Activated CD8-positive, alpha-beta T cell treated with anti-CD3 and anti-CD28 coated beads, Interleukin-2, amount 10 ng/mL, durations not matched to agents 7 days and 5 days (primary cell): ENCODE measurements at regions of chr2 and their contacts with region 1.

Region 1: GRCh38 chr2:38581193-38582147 is 21.3 kb downstream of the HNRNPLL start:
- DNase-seq: peak; percentile 59
- ATAC-seq: peak; percentile 89
- H3K4me3 Mint-ChIP-seq: no peak overlapping the region
- H3K27ac Mint-ChIP-seq: no peak overlapping the region
- H3K4me1 Mint-ChIP-seq: peaks cover 8% of the 10 kb centered on the region
- H3K27me3 Mint-ChIP-seq: no peaks in the 10 kb centered on the region

Region 2: DNA sequence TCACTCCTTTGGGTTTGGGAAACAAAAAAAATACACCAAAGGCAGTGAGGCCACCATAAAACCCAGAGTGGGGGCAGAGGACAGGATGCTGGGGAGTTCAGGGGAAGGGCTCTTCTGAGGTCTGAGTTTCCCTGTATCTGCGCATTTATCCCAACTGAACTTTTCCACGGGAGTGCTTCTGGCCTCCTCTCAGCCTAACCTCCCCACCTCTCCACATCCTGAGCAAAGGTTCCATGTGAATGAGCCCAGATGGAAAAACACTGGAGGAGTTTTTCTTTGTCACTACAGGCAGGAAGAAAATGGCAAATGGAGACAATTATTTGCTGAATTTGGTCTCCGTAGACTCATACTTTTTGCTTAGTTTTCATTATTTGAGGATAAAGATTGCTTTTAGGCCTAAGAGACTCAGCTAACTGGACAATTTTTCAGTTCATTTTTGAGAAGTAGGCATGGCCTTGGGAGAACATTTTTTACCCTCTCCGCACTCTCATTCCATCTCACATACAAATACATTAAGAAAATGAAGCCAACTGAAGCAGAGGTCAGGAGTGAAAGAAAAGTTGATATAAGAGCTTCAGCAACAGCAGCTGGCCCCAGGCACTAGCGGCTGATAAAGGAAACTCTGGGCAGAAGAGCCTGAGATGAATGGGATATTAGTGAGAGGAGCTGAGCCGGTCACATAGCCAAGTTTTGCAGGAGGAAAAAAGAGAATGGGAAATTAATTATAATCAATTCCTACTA is 422.9 kb before region 1 on chr2:
- CTCF ChIA-PET with region 1: no interaction called
- POLR2A ChIA-PET with region 1: no interaction called
- DNase-seq: no peak
- ATAC-seq: no peak
- H3K4me3 Mint-ChIP-seq: no peak overlapping the region
- H3K27ac Mint-ChIP-seq: no peak overlapping the region
- H3K4me1 Mint-ChIP-seq: no peaks in the 10 kb centered on the region
- H3K27me3 Mint-ChIP-seq: peaks cover 56% of the 10 kb centered on the region

Region 3: GRCh38 chr2:38535744-38536506 is 45.5 kb before region 1 on chr2:
- CTCF ChIA-PET with region 1: interaction called, 32 read pairs
- POLR2A ChIA-PET with region 1: no interaction called
- DNase-seq: peak; percentile 83
- ATAC-seq: peak; percentile 97
- H3K4me3 Mint-ChIP-seq: peak overlapping the region; percentile 50
- H3K27ac Mint-ChIP-seq: no peak overlapping the region
- H3K4me1 Mint-ChIP-seq: peaks cover 3% of the 10 kb centered on the region
- H3K27me3 Mint-ChIP-seq: peaks cover 35% of the 10 kb centered on the region

Region 4: DNA sequence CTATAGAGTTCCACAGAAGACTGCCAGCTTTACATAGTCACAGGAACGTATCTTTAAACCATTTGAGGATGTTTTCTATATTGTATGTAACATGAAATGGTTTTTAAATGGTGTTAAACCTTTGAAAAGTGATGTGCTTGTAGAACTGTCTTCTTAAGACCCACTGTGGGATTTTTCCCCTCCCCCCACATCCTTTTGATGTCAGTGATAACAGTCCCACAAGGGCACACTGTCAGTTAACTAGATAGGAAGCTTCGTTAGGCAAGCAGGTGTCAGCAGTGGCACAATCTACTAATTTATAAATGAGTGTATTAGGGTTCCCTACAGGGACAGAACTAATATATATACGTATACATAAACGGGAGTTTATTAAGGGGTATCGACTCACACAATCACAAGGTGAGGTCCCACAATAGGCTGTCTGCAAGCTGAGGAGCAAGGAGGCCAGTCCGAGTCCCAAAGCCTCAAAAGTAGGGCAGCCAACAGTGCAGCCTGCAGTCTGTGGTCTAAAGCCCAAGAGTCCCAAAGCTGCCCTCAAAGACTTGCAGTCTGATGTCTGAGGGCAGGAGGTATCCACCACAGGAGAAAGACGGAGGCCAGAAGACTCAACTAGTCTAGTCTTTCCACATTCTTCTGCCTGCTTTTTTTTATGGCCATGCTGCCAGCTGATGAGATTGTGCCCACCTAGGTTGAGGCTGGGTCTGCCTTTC is 45.0 kb after region 1 on chr2:
- CTCF ChIA-PET with region 1: interaction called, 13 read pairs
- POLR2A ChIA-PET with region 1: no interaction called
- DNase-seq: peak; percentile 73
- ATAC-seq: peak; percentile 81
- H3K4me3 Mint-ChIP-seq: peak overlapping the region; percentile 13
- H3K27ac Mint-ChIP-seq: peak overlapping the region; percentile 54
- H3K4me1 Mint-ChIP-seq: peaks cover 32% of the 10 kb centered on the region
- H3K27me3 Mint-ChIP-seq: no peaks in the 10 kb centered on the region

Region 5: DNA sequence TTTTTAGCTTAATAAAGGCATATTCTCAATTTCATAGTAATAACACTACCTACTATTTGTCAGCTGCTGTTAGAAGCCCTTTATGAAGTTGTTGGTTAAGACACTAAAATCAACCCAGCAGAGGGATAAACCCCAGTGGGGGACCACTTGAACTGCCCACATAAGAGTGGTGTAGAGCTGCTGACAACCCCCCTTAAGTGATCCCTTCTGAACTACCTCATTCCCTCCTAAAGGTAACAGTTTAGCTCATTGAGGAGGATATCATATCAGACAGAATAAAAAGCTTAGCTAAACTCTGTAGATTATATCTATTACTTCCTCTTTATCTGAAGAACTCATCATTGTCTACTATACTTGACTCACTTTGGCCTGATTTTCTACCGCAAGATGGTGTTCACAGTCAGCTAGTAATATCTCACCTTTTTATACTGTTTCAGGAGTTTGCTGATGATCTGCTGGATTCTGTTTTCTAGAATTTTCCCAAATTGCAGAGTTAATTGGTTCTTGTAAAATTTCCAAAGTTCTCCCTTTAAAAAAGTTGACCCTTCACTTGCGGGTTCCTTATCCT is 100.6 kb after region 1 on chr2:
- CTCF ChIA-PET with region 1: interaction called, 24 read pairs
- POLR2A ChIA-PET with region 1: interaction called, 3 read pairs
- DNase-seq: no peak
- ATAC-seq: peak; percentile 56
- H3K4me3 Mint-ChIP-seq: no peak overlapping the region
- H3K27ac Mint-ChIP-seq: peak overlapping the region; percentile 34
- H3K4me1 Mint-ChIP-seq: peaks cover 42% of the 10 kb centered on the region
- H3K27me3 Mint-ChIP-seq: no peaks in the 10 kb centered on the region

Region 6: DNA sequence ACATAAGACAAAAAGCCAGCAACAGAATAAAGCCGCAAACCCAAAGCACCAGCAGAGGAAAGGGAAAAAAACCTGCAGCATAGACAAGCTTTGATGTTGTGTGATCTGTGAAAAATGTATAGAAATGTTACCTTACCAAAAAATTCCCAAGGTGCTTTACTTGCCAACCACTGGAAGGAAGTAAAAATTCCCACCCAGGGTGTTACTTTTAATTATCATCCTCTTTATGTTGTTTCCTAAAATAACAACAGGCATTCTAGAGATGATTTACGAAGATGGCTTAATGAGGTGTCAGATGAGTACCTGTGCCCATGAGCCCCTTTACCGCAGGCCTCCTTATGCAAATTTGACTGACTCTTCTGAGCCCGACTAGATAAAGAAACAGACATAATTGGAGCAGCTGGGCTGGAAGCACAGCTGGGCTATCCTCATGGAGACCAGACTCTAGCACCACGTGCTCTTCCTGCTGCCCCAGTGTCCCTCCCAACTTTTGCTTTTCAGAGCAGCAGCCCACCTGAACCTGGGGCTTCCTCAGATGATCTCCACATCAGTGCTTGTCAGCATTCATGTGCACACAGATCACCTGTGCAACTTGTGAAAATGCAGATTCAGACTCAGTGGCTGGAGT is 128.2 kb after region 1 on chr2:
- CTCF ChIA-PET with region 1: interaction called, 14 read pairs
- POLR2A ChIA-PET with region 1: no interaction called
- DNase-seq: peak; percentile 54
- ATAC-seq: peak; percentile 71
- H3K4me3 Mint-ChIP-seq: peak overlapping the region; percentile 31
- H3K27ac Mint-ChIP-seq: peak overlapping the region; percentile 66
- H3K4me1 Mint-ChIP-seq: peaks cover 37% of the 10 kb centered on the region
- H3K27me3 Mint-ChIP-seq: no peaks in the 10 kb centered on the region

Region 7: GRCh38 chr2:38740851-38741731 is 159.6 kb after region 1 on chr2:
- CTCF ChIA-PET with region 1: interaction called, 160 read pairs
- POLR2A ChIA-PET with region 1: interaction called, 8 read pairs
- DNase-seq: no peak
- ATAC-seq: peak; percentile 25
- H3K4me3 Mint-ChIP-seq: no peak overlapping the region
- H3K27ac Mint-ChIP-seq: no peak overlapping the region
- H3K4me1 Mint-ChIP-seq: peaks cover 31% of the 10 kb centered on the region
- H3K27me3 Mint-ChIP-seq: no peaks in the 10 kb centered on the region